CD4-positive, alpha-beta T cell (primary cell): ENCODE measurements at regions of chr17 and their contacts with region 1.

Region 1: GRCh38 chr17:75289115-75289831 is at the start of gene SLC25A19:
- DNase-seq: peak; percentile 91 to 99 (median 94)
- ATAC-seq: peak; percentile 87
- H3K4me3 ChIP-seq: peak within 1 kb of the TSS; percentile 64
- H3K4me3 Mint-ChIP-seq: peak within 1 kb of the TSS; percentile 99
- H3K27ac ChIP-seq: peak within 1 kb of the TSS; percentile 95 to 99
- H3K27ac Mint-ChIP-seq: peak within 1 kb of the TSS; percentile 98
- H3K4me1 ChIP-seq: peaks cover 21% of the 10 kb centered on the region
- H3K4me1 Mint-ChIP-seq: peaks cover 22% of the 10 kb centered on the region
- H3K27me3 ChIP-seq: no peaks in the 10 kb centered on the region
- H3K27me3 Mint-ChIP-seq: no peaks in the 10 kb centered on the region
- CTCF ChIP-seq: peak; percentile 45
- total RNA-seq, gene SLC25A19: 11.1 to 12.0 TPM

Region 2: GRCh38 chr17:75271233-75271954 is 17.9 kb before region 1 on chr17:
- CTCF ChIA-PET with region 1: interaction called, 66 read pairs
- POLR2A ChIA-PET with region 1: interaction called, 181 read pairs
- intact Hi-C with region 1: loop called (anchors 1 kb)
- DNase-seq: peak; percentile 70 to 96 (median 86)
- ATAC-seq: peak; percentile 90
- H3K4me3 ChIP-seq: peak overlapping the region; percentile 95
- H3K4me3 Mint-ChIP-seq: peak overlapping the region; percentile 84
- H3K27ac ChIP-seq: peak overlapping the region; percentile 78 to 85
- H3K27ac Mint-ChIP-seq: peak overlapping the region; percentile 48
- H3K4me1 ChIP-seq: peaks cover 40% of the 10 kb centered on the region
- H3K4me1 Mint-ChIP-seq: peaks cover 21% of the 10 kb centered on the region
- H3K27me3 ChIP-seq: no peaks in the 10 kb centered on the region
- H3K27me3 Mint-ChIP-seq: no peaks in the 10 kb centered on the region
- CTCF ChIP-seq: peak; percentile 54

Region 3: GRCh38 chr17:75319904-75320691 is 30.8 kb after region 1 on chr17:
- CTCF ChIA-PET with region 1: interaction called, 19 read pairs
- POLR2A ChIA-PET with region 1: interaction called, 24 read pairs
- intact Hi-C with region 1: loop called (anchors 2 to 5 kb)
- DNase-seq: no peak
- ATAC-seq: no peak
- H3K4me3 ChIP-seq: no peak overlapping the region
- H3K4me3 Mint-ChIP-seq: no peak overlapping the region
- H3K27ac ChIP-seq: no peak overlapping the region
- H3K27ac Mint-ChIP-seq: no peak overlapping the region
- H3K4me1 ChIP-seq: peaks cover 11% of the 10 kb centered on the region
- H3K4me1 Mint-ChIP-seq: peaks cover 9% of the 10 kb centered on the region
- H3K27me3 ChIP-seq: no peaks in the 10 kb centered on the region
- H3K27me3 Mint-ChIP-seq: no peaks in the 10 kb centered on the region
- CTCF ChIP-seq: no peak

Region 4: GRCh38 chr17:75345514-75346167 is 56.4 kb after region 1 on chr17:
- CTCF ChIA-PET with region 1: no interaction called
- POLR2A ChIA-PET with region 1: interaction called, 17 read pairs
- intact Hi-C with region 1: no loop called
- DNase-seq: peak in 12 of 14 experiments; percentile 12 to 71 (median 44)
- ATAC-seq: peak; percentile 79
- H3K4me3 ChIP-seq: peak overlapping the region; percentile 15
- H3K4me3 Mint-ChIP-seq: peak overlapping the region; percentile 76
- H3K27ac ChIP-seq: peak overlapping the region in 1 of 2 donors; percentile 12
- H3K27ac Mint-ChIP-seq: peak overlapping the region; percentile 85
- H3K4me1 ChIP-seq: peaks cover 93% of the 10 kb centered on the region
- H3K4me1 Mint-ChIP-seq: peaks cover 95% of the 10 kb centered on the region
- H3K27me3 ChIP-seq: no peaks in the 10 kb centered on the region
- H3K27me3 Mint-ChIP-seq: no peaks in the 10 kb centered on the region
- CTCF ChIP-seq: no peak

Region 5: GRCh38 chr17:75412455-75413317 is 123.4 kb after region 1 on chr17:
- CTCF ChIA-PET with region 1: interaction called, 39 read pairs
- POLR2A ChIA-PET with region 1: interaction called, 12 read pairs
- intact Hi-C with region 1: loop called in 1 of 2 experiments (anchors 1 kb)
- DNase-seq: peak; percentile 55 to 89 (median 66)
- ATAC-seq: peak; percentile 94
- H3K4me3 ChIP-seq: peak overlapping the region; percentile 11
- H3K4me3 Mint-ChIP-seq: peak overlapping the region; percentile 11
- H3K27ac ChIP-seq: no peak overlapping the region
- H3K27ac Mint-ChIP-seq: no peak overlapping the region
- H3K4me1 ChIP-seq: peaks cover 14% of the 10 kb centered on the region
- H3K4me1 Mint-ChIP-seq: peaks cover 16% of the 10 kb centered on the region
- H3K27me3 ChIP-seq: no peaks in the 10 kb centered on the region
- H3K27me3 Mint-ChIP-seq: no peaks in the 10 kb centered on the region
- CTCF ChIP-seq: peak; percentile 81

Region 6: GRCh38 chr17:75440738-75441448 is 151.6 kb after region 1 on chr17:
- CTCF ChIA-PET with region 1: no interaction called
- POLR2A ChIA-PET with region 1: no interaction called
- intact Hi-C with region 1: no loop called
- DNase-seq: no peak
- ATAC-seq: no peak
- H3K4me3 ChIP-seq: no peak overlapping the region
- H3K4me3 Mint-ChIP-seq: no peak overlapping the region
- H3K27ac ChIP-seq: no peak overlapping the region
- H3K27ac Mint-ChIP-seq: no peak overlapping the region
- H3K4me1 ChIP-seq: peaks cover 8% of the 10 kb centered on the region
- H3K4me1 Mint-ChIP-seq: peaks cover 9% of the 10 kb centered on the region
- H3K27me3 ChIP-seq: no peaks in the 10 kb centered on the region
- H3K27me3 Mint-ChIP-seq: no peaks in the 10 kb centered on the region
- CTCF ChIP-seq: no peak

Region 7: DNA sequence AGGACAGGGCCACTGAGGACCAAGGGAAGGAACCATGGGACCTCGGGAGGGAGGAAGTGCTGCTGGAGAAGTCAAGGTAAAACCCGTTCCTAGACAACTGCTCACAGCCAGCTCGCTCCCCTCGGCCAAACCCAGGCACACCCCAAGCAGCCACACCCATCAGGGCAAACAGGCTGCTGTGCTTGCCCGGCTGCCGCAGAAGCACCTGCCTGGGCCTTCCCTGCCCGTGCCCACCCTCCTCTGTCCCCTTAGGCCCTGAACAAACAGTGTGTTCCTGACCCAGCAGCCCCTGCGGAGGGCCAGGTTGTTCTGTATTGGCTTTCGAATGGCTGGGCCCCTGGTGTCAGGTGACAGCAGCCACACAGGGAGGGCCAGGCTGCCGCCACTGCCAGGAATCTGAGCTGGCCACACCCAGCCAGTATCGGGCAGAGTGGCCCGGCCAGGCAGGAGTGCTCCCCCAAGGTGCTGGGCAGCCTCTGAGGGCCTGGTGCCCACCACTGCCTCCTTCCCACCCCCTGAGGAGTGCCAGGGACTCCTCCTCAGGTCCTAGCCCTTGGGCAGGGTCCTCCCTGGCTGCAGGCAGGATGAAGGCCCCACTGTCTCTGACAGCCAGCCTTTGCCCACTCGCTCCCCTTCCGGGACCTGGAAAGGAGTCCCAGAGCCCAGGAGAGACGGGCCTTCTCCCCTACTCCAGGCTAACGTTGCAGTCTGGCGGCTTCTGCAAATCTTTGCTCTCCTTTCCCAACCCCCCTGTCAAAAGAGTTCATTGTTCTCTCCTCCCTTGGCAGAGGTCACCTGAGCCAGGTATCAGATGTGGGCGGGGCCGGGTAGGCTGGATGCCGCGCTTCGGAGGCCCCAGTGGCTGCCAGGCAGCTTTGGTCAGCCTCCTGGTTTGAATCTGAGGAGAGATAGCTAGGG is 260.2 kb after region 1 on chr17:
- CTCF ChIA-PET with region 1: no interaction called
- POLR2A ChIA-PET with region 1: no interaction called
- intact Hi-C with region 1: no loop called
- DNase-seq: no peak
- ATAC-seq: no peak
- H3K4me3 ChIP-seq: no peak overlapping the region
- H3K4me3 Mint-ChIP-seq: no peak overlapping the region
- H3K27ac ChIP-seq: no peak overlapping the region
- H3K27ac Mint-ChIP-seq: no peak overlapping the region
- H3K4me1 ChIP-seq: peaks cover 2% of the 10 kb centered on the region
- H3K4me1 Mint-ChIP-seq: no peaks in the 10 kb centered on the region
- H3K27me3 ChIP-seq: no peaks in the 10 kb centered on the region
- H3K27me3 Mint-ChIP-seq: no peaks in the 10 kb centered on the region
- CTCF ChIP-seq: no peak